Natural killer cell (primary cell): ENCODE measurements at regions of chr7 and their contacts with region 1.

Region 1: GRCh38 chr7:64407148-64407547 is 93.4 kb downstream of the ZNF736 start:
- DNase-seq: no peak
- ATAC-seq: no peak
- H3K4me3 ChIP-seq: no peak overlapping the region
- H3K4me3 Mint-ChIP-seq: no peak overlapping the region
- H3K27ac ChIP-seq: no peak overlapping the region
- H3K27ac Mint-ChIP-seq: no peak overlapping the region
- H3K4me1 ChIP-seq: no peaks in the 10 kb centered on the region
- H3K4me1 Mint-ChIP-seq: no peaks in the 10 kb centered on the region
- H3K27me3 ChIP-seq: no peaks in the 10 kb centered on the region
- H3K27me3 Mint-ChIP-seq: no peaks in the 10 kb centered on the region
- CTCF ChIP-seq: no peak

Region 2: DNA sequence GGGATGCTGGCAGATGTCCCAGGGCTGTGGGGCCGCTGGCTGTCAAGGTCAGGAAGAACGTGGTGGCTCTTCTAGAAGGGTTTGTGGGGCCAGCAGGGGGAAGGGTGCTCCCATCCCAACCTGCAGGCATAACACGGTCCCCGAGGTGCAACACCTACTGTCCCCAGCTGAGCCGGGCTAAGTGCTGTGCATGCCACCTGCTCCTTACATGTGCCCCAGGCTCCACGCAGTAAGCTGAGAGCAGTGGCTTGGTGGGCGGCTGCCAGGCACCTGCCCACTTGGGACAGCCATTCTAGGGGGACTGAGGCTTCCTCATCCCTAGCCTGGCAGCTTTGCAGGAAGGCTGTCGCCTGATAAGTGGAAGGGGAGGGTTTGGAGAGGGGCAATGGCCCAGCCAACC is 214.4 kb before region 1 on chr7:
- intact Hi-C with region 1: no loop called
- DNase-seq: no peak
- ATAC-seq: no peak
- H3K4me3 ChIP-seq: no peak overlapping the region
- H3K4me3 Mint-ChIP-seq: no peak overlapping the region
- H3K27ac ChIP-seq: no peak overlapping the region
- H3K27ac Mint-ChIP-seq: no peak overlapping the region
- H3K4me1 ChIP-seq: no peaks in the 10 kb centered on the region
- H3K4me1 Mint-ChIP-seq: no peaks in the 10 kb centered on the region
- H3K27me3 ChIP-seq: no peaks in the 10 kb centered on the region
- H3K27me3 Mint-ChIP-seq: no peaks in the 10 kb centered on the region
- CTCF ChIP-seq: no peak

Region 3: DNA sequence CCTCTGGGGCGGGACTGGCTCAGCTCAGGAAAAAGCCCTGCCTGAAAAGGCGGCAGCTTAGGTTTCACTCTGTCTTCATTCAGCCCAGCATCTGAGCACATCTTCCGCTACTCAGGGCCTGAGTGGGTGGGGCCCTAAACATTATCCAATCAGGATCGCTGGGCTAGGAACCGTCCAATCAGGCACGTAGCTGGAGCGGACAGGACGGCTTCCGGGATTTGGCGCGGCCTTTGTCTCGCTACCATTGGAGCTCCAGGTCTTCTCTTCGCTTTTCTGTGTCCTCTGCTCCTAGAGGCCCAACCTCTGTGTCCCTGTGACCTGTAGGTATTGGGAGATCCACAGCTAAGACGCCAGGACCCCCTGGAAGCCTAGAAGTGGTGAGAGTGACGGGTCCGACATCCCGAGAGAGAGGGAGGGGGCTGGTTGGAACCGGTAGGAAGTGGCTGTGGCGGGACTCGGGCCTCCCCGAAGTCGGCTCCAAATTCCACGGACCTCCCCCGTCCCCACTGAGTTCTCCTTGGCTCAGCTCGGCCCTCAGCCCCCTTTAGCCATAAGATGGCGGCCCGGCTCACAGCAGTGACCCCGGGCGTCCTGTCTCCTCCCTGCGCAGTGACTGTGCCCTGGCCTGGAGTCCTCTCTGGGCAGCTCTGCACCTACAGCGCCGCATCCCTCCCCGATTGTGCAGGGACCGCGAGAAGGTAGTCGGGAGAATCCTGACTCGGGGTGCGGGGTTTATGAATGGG is 56.7 kb after region 1 on chr7:
- intact Hi-C with region 1: loop called (anchors 10 kb)
- DNase-seq: peak in 1 of 2 donors; percentile 35
- ATAC-seq: peak in 2 of 3 donors; percentile 73 to 99
- H3K4me3 ChIP-seq: no peak overlapping the region
- H3K4me3 Mint-ChIP-seq: peak overlapping the region; percentile 72
- H3K27ac ChIP-seq: no peak overlapping the region
- H3K27ac Mint-ChIP-seq: no peak overlapping the region
- H3K4me1 ChIP-seq: no peaks in the 10 kb centered on the region
- H3K4me1 Mint-ChIP-seq: no peaks in the 10 kb centered on the region
- H3K27me3 ChIP-seq: no peaks in the 10 kb centered on the region
- H3K27me3 Mint-ChIP-seq: no peaks in the 10 kb centered on the region
- CTCF ChIP-seq: no peak